Natural killer cell (primary cell): ENCODE measurements at regions of chr7 and their contacts with region 1.

Region 1: DNA sequence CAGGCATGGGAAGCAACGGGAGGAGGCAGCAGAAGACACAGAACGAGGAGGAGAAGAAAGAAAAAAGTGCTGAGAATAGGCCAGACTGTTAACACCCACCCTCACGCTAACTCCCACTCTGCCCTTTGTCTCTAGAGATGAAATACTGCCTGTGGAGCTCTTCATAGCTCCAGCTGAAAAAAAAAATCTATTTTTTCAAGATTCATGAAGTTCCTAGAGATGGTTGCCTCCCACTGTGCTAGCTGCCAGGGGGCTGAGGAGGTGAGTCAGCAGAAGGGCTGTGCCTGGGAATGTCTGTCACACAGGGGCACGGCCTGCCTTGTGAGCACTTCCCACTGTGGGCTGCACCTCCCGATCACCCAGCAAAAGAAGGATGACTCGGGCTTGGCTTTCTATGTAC is 144.5 kb downstream of the RNF216 start:
- DNase-seq: no peak
- ATAC-seq: no peak
- H3K4me3 ChIP-seq: no peak overlapping the region
- H3K4me3 Mint-ChIP-seq: no peak overlapping the region
- H3K27ac ChIP-seq: no peak overlapping the region
- H3K27ac Mint-ChIP-seq: no peak overlapping the region
- H3K4me1 ChIP-seq: peaks cover 12% of the 10 kb centered on the region
- H3K4me1 Mint-ChIP-seq: peaks cover 4 to 14% of the 10 kb centered on the region in 2 donors
- H3K27me3 ChIP-seq: no peaks in the 10 kb centered on the region
- H3K27me3 Mint-ChIP-seq: no peaks in the 10 kb centered on the region
- CTCF ChIP-seq: no peak

Region 2: GRCh38 chr7:5452937-5453540 is 183.9 kb before region 1 on chr7:
- intact Hi-C with region 1: no loop called
- DNase-seq: no peak
- ATAC-seq: no peak
- H3K4me3 ChIP-seq: no peak overlapping the region
- H3K4me3 Mint-ChIP-seq: no peak overlapping the region
- H3K27ac ChIP-seq: no peak overlapping the region
- H3K27ac Mint-ChIP-seq: no peak overlapping the region
- H3K4me1 ChIP-seq: peaks cover 6% of the 10 kb centered on the region
- H3K4me1 Mint-ChIP-seq: peaks cover 0 to 16% of the 10 kb centered on the region in 2 donors
- H3K27me3 ChIP-seq: peaks cover 2% of the 10 kb centered on the region
- H3K27me3 Mint-ChIP-seq: peaks cover 11 to 13% of the 10 kb centered on the region in 2 donors
- CTCF ChIP-seq: no peak

Region 3: GRCh38 chr7:5657901-5658300 is 21.0 kb after region 1 on chr7:
- intact Hi-C with region 1: loop called (anchors 2 kb)
- DNase-seq: no peak
- ATAC-seq: no peak
- H3K4me3 ChIP-seq: no peak overlapping the region
- H3K4me3 Mint-ChIP-seq: no peak overlapping the region
- H3K27ac ChIP-seq: no peak overlapping the region
- H3K27ac Mint-ChIP-seq: no peak overlapping the region
- H3K4me1 ChIP-seq: peaks cover 36% of the 10 kb centered on the region
- H3K4me1 Mint-ChIP-seq: peaks cover 30 to 51% of the 10 kb centered on the region in 2 donors
- H3K27me3 ChIP-seq: no peaks in the 10 kb centered on the region
- H3K27me3 Mint-ChIP-seq: peaks cover 0 to 5% of the 10 kb centered on the region in 2 donors
- CTCF ChIP-seq: no peak

Region 4: GRCh38 chr7:5665094-5666025 is 28.4 kb after region 1 on chr7:
- intact Hi-C with region 1: loop called (anchors 5 kb)
- DNase-seq: peak; percentile 52 to 87
- ATAC-seq: peak; percentile 50 to 73 (median 52)
- H3K4me3 ChIP-seq: no peak overlapping the region
- H3K4me3 Mint-ChIP-seq: no peak overlapping the region
- H3K27ac ChIP-seq: no peak overlapping the region
- H3K27ac Mint-ChIP-seq: no peak overlapping the region
- H3K4me1 ChIP-seq: peaks cover 29% of the 10 kb centered on the region
- H3K4me1 Mint-ChIP-seq: peaks cover 22 to 24% of the 10 kb centered on the region in 2 donors
- H3K27me3 ChIP-seq: no peaks in the 10 kb centered on the region
- H3K27me3 Mint-ChIP-seq: no peaks in the 10 kb centered on the region
- CTCF ChIP-seq: peak; percentile 85